GM12878 (cell line): ENCODE measurements at regions of chr5 and their contacts with region 1.

Region 1: DNA sequence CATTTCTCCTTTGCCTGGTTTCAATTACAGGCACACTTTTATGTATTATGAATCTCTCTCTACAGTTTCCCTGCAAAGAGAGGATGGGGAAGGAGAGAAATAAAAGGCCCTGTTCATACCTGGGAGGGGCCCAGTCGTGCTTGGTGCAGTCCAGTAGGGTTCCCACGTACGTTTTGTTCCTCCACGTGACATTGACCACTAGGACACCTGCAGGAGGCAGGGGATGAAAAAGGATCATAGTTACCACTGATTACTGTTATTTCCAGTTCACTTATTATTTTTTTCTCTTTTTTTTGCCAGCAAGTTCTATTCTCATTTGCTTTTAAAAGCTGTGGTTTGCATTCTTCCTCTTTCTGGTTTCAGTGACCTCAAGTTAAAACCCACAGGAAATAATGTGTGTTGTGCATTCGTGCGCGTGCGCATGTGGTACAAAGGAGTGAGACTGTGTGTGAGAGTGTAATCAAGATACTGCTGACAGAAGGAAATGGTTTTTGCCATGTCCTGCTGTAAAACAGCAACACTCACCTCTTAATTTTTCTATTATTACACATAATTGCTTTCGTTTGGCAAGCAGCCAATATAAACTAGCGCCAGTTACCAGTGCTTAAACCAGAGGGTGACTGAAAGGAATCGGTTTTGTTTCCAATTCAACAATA is 96.8 kb downstream of the ZNF608 start:
- DNase-seq: peak; percentile 99
- ATAC-seq: peak; percentile 85
- H3K4me3 ChIP-seq: peak overlapping the region; percentile 17; the same call in 1 of the 2 replicates
- H3K27ac ChIP-seq: peak overlapping the region; percentile 68
- H3K4me1 ChIP-seq: peaks cover 49% of the 10 kb centered on the region
- H3K27me3 ChIP-seq: no peaks in the 10 kb centered on the region
- CTCF ChIP-seq: 0 out of 6 replicates have a peak, but pooled peaks of 1 of the 3 experiments have one; percentile 3
- EP300 ChIP-seq: peak; percentile 96 to 98
- POLR2A ChIP-seq: no peak
- RAD21 ChIP-seq: peak; percentile 28; the same call in 1 of the 2 replicates

Region 2: DNA sequence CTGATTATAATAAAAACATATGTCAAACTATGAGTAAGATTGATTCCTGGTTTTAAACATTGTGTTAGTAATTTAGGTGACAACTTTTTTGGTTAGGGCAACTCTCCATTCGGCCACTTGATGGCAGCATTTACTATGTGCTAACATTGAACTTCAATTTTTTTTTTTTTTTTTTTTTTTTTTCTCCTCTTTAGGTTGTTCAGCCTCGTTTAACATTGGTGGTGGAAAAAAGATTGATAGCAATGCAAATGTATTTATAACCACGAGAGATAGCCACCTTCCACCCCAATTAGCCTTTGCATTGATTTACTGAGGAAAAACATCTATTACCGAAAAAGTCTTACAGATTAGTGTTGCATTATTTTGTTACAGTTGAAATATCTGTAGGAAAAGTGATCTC is 978.6 kb before region 1 on chr5:
- CTCF ChIA-PET with region 1: interaction called, 4 read pairs
- POLR2A ChIA-PET with region 1: no interaction called
- RAD21 ChIA-PET with region 1: no interaction called
- SMC1A ChIA-PET with region 1: no interaction called
- in situ Hi-C with region 1: no loop called
- intact Hi-C with region 1: loop called (anchors 5 kb)
- DNase-seq: no peak
- ATAC-seq: peak; percentile 27; the same call in 2 of the 3 replicates
- H3K4me3 ChIP-seq: no peak overlapping the region
- H3K27ac ChIP-seq: no peak overlapping the region
- H3K4me1 ChIP-seq: no peaks in the 10 kb centered on the region
- H3K27me3 ChIP-seq: no peaks in the 10 kb centered on the region
- CTCF ChIP-seq: peak; percentile 71 to 74 (median 72)
- EP300 ChIP-seq: no peak
- POLR2A ChIP-seq: no peak
- RAD21 ChIP-seq: peak; percentile 89

Region 3: DNA sequence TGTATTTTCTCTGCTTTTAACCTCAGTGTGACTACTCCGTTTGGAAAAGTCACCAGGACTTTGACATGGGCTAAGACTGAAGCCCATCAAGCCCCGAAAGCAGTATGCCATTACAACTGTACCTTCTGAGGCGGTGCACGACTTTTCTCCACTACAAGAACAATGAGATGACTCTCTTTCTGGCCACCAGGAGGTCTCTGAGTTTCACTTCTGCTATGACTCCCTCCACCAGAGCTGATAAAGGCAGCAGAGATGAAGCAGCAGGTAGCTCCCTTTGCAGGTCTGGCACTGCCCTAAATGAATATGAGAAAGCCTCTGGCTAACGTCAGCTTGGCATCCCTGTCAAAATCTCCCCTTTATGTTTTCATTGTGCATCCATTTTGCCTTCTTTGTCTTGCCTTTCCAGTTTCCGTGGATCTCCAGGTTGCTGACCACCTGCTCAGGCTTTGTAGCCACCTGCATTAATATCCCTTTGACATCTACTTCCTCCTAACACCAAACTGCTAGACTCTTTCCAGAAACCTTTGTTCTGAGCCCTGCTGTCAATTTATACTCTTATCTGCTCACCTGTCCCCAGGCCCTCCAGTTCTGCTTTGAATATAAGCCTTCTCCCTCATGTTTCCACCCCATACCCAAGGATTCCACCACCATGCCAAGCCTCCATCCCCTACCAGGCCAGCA is 124.9 kb before region 1 on chr5:
- CTCF ChIA-PET with region 1: no interaction called
- POLR2A ChIA-PET with region 1: no interaction called
- RAD21 ChIA-PET with region 1: no interaction called
- SMC1A ChIA-PET with region 1: no interaction called
- in situ Hi-C with region 1: no loop called
- intact Hi-C with region 1: loop called (anchors 5 kb)
- DNase-seq: peak; percentile 35
- ATAC-seq: peak; percentile 86
- H3K4me3 ChIP-seq: no peak overlapping the region
- H3K27ac ChIP-seq: no peak overlapping the region
- H3K4me1 ChIP-seq: peaks cover 20% of the 10 kb centered on the region
- H3K27me3 ChIP-seq: 0 out of 4 replicates have a peak, but pooled peaks cover 0 to 3% of the 10 kb centered on the region in 2 experiments
- CTCF ChIP-seq: peak; percentile 26 to 50 (median 30); a peak in 5 of 6 replicates
- EP300 ChIP-seq: no peak
- POLR2A ChIP-seq: no peak
- RAD21 ChIP-seq: peak; percentile 67

Region 4: GRCh38 chr5:124725040-124725434 is 75.4 kb after region 1 on chr5:
- CTCF ChIA-PET with region 1: interaction called, 6 read pairs
- POLR2A ChIA-PET with region 1: interaction called, 3 read pairs
- RAD21 ChIA-PET with region 1: interaction called, 3 read pairs
- SMC1A ChIA-PET with region 1: interaction called, 6 read pairs
- in situ Hi-C with region 1: no loop called
- intact Hi-C with region 1: loop called (anchors 5 kb)
- DNase-seq: no peak
- ATAC-seq: peak; percentile 78
- H3K4me3 ChIP-seq: peak overlapping the region; percentile 46; the same call in 1 of the 2 replicates
- H3K27ac ChIP-seq: peak overlapping the region; percentile 73
- H3K4me1 ChIP-seq: peaks cover 12% of the 10 kb centered on the region
- H3K27me3 ChIP-seq: no peaks in the 10 kb centered on the region
- CTCF ChIP-seq: peak; percentile 32 to 44 (median 33); a peak in 5 of 6 replicates
- EP300 ChIP-seq: no peak
- POLR2A ChIP-seq: no peak
- RAD21 ChIP-seq: peak; percentile 43

Region 5: GRCh38 chr5:124902097-124902821 is 252.6 kb after region 1 on chr5:
- CTCF ChIA-PET with region 1: no interaction called
- POLR2A ChIA-PET with region 1: no interaction called
- RAD21 ChIA-PET with region 1: interaction called, 4 read pairs
- SMC1A ChIA-PET with region 1: interaction called, 6 read pairs
- in situ Hi-C with region 1: no loop called
- intact Hi-C with region 1: loop called (anchors 2 kb)
- DNase-seq: peak; percentile 92
- ATAC-seq: peak; percentile 99
- H3K4me3 ChIP-seq: 0 out of 2 replicates have a peak overlapping the region, but pooled peaks have one; percentile 15
- H3K27ac ChIP-seq: peak overlapping the region; percentile 59
- H3K4me1 ChIP-seq: peaks cover 17% of the 10 kb centered on the region
- H3K27me3 ChIP-seq: no peaks in the 10 kb centered on the region
- CTCF ChIP-seq: no peak
- EP300 ChIP-seq: peak; percentile 77 to 90; a peak in 3 of 4 replicates
- POLR2A ChIP-seq: 0 out of 2 replicates have a peak, but pooled peaks have one; percentile 33
- RAD21 ChIP-seq: peak; percentile 33; the same call in 1 of the 2 replicates

Region 6: GRCh38 chr5:124935065-124935464 is 285.4 kb after region 1 on chr5:
- CTCF ChIA-PET with region 1: no interaction called
- POLR2A ChIA-PET with region 1: interaction called, 4 read pairs
- RAD21 ChIA-PET with region 1: interaction called, 3 read pairs
- SMC1A ChIA-PET with region 1: interaction called, 6 read pairs
- in situ Hi-C with region 1: loop called (anchors 10 kb)
- intact Hi-C with region 1: loop called (anchors 1 kb)
- DNase-seq: peak; percentile 87
- ATAC-seq: peak; percentile 80
- H3K4me3 ChIP-seq: no peak overlapping the region
- H3K27ac ChIP-seq: peak overlapping the region; percentile 89
- H3K4me1 ChIP-seq: peaks cover 21% of the 10 kb centered on the region
- H3K27me3 ChIP-seq: no peaks in the 10 kb centered on the region
- CTCF ChIP-seq: no peak
- EP300 ChIP-seq: peak; percentile 91 to 95
- POLR2A ChIP-seq: peak; percentile 30; the same call in 1 of the 2 replicates
- RAD21 ChIP-seq: peak; percentile 29; the same call in 1 of the 2 replicates